ENCODE measurements at regions of chr3 and their contacts with region 1.

Region 1: GRCh38 chr3:190048932-190049441 is 71.7 kb downstream of the P3H2 start:
- DNase-seq: no peak
- H3K4me3 ChIP-seq: peak overlapping the region; percentile 50
- CTCF ChIP-seq: no peak

Region 2: GRCh38 chr3:190060192-190060775 is 11.3 kb after region 1 on chr3:
- CTCF ChIA-PET with region 1: interaction called, 20 read pairs
- POLR2A ChIA-PET with region 1: no interaction called
- DNase-seq: no peak
- H3K4me3 ChIP-seq: no peak overlapping the region
- CTCF ChIP-seq: no peak

Region 3: GRCh38 chr3:190252080-190252479 is 203.1 kb after region 1 on chr3:
- CTCF ChIA-PET with region 1: no interaction called
- POLR2A ChIA-PET with region 1: no interaction called
- DNase-seq: peak; percentile 61
- H3K4me3 ChIP-seq: no peak overlapping the region
- CTCF ChIP-seq: no peak